ENCODE measurements at regions of chr15 and their contacts with region 1.

Region 1: DNA sequence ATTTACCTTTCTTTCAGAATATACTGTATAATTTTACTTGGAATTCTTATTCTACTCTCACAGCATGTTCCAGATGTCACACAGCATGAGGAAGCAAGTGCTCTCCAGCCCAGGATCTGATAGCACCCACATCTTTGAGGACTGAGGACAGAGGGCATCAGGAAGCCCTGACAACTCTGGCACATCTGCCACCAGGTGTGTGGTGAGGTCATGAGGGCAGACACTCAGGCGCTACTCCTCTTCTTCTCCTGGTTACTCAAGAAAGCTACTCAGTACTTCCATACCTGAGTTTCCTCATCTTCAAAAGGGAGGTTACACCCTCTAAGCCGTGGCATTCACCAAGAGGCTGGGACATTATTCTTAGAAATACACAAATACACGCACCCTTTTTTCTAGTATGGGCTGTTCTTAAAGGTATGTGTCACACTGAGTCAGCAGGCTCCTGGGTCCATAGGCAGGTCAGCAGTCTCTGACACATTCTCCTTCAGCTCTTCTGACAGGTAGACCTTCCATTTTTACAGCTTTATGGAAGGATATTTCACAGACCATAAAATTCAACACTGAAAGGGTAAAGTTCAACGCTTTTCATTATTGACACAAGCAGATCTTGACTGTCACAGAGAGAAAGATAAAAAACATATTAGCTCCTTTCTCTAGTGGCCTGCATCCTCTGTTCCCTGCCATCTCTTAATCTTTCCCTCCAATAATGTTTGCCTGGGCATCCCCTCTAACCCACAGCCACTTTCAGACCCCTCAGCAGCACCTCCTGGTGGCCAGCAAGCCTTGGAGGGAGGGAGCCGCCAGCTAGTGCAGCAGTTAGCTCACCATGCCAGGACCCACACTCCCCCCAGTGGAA is 103.2 kb upstream of the TJP1 start:
- DNase-seq: no peak
- H3K4me3 ChIP-seq: no peak overlapping the region
- CTCF ChIP-seq: peak; percentile 90

Region 2: GRCh38 chr15:29736744-29737020 is 188.8 kb before region 1 on chr15:
- CTCF ChIA-PET with region 1: interaction called, 11 read pairs
- POLR2A ChIA-PET with region 1: no interaction called
- DNase-seq: no peak
- H3K4me3 ChIP-seq: no peak overlapping the region
- CTCF ChIP-seq: no peak

Region 3: DNA sequence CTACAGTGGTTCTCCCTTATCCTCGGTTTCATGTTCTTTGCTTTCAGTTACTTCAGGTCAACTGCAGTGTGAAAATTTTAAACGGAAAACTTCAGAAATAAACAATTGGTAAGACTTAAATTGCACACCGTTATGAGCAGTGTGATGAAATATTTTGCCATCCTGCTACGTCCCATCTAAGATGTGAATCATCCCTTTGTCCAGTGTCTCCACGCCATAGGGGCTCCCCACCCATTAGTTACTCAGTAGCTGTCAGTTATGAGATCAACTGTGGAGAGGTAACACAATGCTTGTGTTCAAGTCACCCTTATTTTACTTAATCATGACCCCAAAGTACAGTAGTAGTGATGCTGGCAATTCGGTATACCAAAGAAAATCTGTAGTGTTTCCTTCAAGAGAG is 150.6 kb before region 1 on chr15:
- CTCF ChIA-PET with region 1: interaction called, 16 read pairs
- POLR2A ChIA-PET with region 1: no interaction called
- DNase-seq: no peak
- H3K4me3 ChIP-seq: no peak overlapping the region
- CTCF ChIP-seq: no peak

Region 4: GRCh38 chr15:29821416-29822131 is 103.9 kb before region 1 on chr15:
- CTCF ChIA-PET with region 1: interaction called, 15 read pairs
- POLR2A ChIA-PET with region 1: interaction called, 4 read pairs
- DNase-seq: peak; percentile 31
- H3K4me3 ChIP-seq: peak overlapping the region; percentile 75
- CTCF ChIP-seq: peak; percentile 59

Measured in AG04449 (cell line).